ENCODE measurements at regions of chr15 and their contacts with region 1.

Region 1: DNA sequence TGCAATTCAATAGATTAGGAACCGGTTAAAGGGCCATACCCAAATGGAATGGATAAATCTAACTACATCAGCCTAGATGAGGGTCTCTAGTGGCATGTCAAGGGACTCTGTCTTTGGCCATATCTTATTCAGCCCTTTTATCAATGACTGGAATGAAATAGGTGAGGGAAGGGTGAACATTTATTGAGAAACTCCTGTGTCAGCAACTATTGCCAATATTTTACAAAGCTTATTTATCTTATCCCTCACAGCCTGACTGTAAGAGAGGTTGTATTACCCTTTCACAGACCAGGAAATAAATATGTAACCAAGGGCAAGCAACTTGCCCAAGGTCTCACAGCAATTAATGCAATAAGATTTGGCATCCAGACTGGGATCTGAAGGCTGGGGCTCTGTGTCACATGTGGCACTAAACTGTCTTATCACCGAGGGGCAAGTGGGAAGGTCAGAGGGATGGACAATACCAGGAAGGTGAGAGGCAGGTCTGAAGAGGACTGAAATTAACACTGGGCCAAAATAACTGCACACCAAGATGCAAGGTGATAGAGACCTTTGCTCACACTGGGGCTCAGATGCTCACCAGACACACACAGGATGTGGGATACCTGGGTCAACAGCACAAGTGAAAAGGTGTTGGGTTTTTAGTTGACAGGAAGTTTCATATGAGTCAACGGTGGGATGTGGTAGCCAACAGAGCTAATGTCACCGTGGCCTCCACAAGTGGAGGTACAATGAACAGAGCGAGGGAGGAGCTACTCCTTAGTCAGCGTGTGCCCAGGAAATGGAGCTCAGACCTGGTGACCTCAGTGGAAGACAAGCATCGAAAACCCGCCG is 261.3 kb downstream of the RPLP1 start:
- DNase-seq: peak; percentile 80 to 92 (median 85)
- H3K4me3 ChIP-seq: no peak overlapping the region
- H3K4me3 Mint-ChIP-seq: peak overlapping the region; percentile 54 to 88 (median 73)
- H3K27ac ChIP-seq: peak overlapping the region; percentile 11
- H3K27ac Mint-ChIP-seq: peak overlapping the region; percentile 81 to 95 (median 90)
- H3K4me1 ChIP-seq: peaks cover 73% of the 10 kb centered on the region
- H3K4me1 Mint-ChIP-seq: peaks cover 47 to 76% (median 64%) of the 10 kb centered on the region in 4 donors
- H3K27me3 ChIP-seq: no peaks in the 10 kb centered on the region
- H3K27me3 Mint-ChIP-seq: no peaks in the 10 kb centered on the region

Region 2: GRCh38 chr15:69604072-69604411 is 109.9 kb before region 1 on chr15:
- CTCF ChIA-PET with region 1: no interaction called
- POLR2A ChIA-PET with region 1: no interaction called
- intact Hi-C with region 1: no loop called
- DNase-seq: no peak
- H3K4me3 ChIP-seq: no peak overlapping the region
- H3K4me3 Mint-ChIP-seq: no peak overlapping the region
- H3K27ac ChIP-seq: no peak overlapping the region
- H3K27ac Mint-ChIP-seq: no peak overlapping the region
- H3K4me1 ChIP-seq: no peaks in the 10 kb centered on the region
- H3K4me1 Mint-ChIP-seq: peaks cover 6 to 13% (median 7%) of the 10 kb centered on the region in 4 donors
- H3K27me3 ChIP-seq: no peaks in the 10 kb centered on the region
- H3K27me3 Mint-ChIP-seq: peaks cover 0 to 4% of the 10 kb centered on the region in 2 donors

Region 3: GRCh38 chr15:69729161-69729748 is 15.3 kb after region 1 on chr15:
- CTCF ChIA-PET with region 1: interaction called, 13 read pairs
- POLR2A ChIA-PET with region 1: interaction called, 12 read pairs
- intact Hi-C with region 1: no loop called
- DNase-seq: peak; percentile 59 to 68 (median 64)
- H3K4me3 ChIP-seq: no peak overlapping the region
- H3K4me3 Mint-ChIP-seq: peak overlapping the region in 1 of 8 donors; percentile 10
- H3K27ac ChIP-seq: no peak overlapping the region
- H3K27ac Mint-ChIP-seq: peak overlapping the region in 1 of 7 donors; percentile 0
- H3K4me1 ChIP-seq: peaks cover 20% of the 10 kb centered on the region
- H3K4me1 Mint-ChIP-seq: peaks cover 9 to 32% (median 23%) of the 10 kb centered on the region in 4 donors
- H3K27me3 ChIP-seq: no peaks in the 10 kb centered on the region
- H3K27me3 Mint-ChIP-seq: peaks cover 0 to 2% of the 10 kb centered on the region in 2 donors

Measured in CD4-positive, alpha-beta memory T cell (primary cell).